ENCODE measurements at regions of chr2 and their contacts with region 1.

Region 1: DNA sequence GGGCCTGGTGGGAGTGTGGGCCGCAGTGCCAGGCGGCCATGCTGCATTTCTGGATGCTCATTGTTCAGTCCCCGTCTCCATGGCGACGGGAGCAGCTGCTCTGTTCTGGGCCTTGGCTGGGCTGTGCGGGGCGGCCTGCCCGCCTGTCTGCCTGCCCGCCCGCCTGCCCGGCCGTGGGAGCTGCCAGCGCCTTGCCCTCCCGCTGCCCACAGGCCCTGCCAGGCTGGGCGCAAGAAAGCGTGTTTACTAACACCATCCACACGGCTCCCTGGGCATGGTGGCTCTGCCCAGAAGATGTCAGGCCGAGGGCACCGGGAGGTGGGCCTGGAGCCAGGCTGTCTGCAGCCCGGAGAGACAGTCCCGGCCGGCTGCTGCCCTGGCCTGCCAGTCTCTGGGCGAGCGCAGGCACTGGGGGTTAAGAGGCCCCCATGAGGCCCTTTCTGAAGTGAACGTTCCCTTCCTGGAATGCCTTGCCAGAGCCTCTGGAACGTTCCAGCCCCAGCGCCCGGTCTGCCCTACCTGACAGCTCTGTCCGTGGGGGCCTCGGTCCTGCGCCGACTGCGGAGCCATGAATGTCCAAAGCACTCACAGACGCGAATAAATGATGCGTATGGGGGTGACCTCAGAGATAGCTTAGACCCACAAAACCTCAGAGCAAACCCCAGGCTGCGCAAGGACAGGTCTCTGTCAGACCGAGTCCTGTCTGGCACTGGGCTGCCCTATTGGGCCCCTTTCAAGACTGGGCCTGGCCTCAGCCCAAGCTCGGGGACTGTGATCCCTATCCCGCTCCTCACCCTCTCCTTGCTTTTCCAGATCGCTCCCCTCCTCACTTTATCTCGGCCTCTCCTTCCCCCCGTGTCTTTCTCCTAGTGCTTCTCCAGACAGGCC is 44.3 kb downstream of the MYCN start:
- DNase-seq: peak; percentile 87 to 95 (median 92)
- H3K4me3 ChIP-seq: peak overlapping the region in 22 of 59 donors; percentile 0 to 37 (median 19)
- H3K27ac ChIP-seq: peak overlapping the region; percentile 64 to 96 (median 91)
- H3K27me3 ChIP-seq: no peaks in the 10 kb centered on the region
- CTCF ChIP-seq: peak in 20 of 56 donors; percentile 6 to 42 (median 21)

Region 2: GRCh38 chr2:16012619-16013358 is 28.2 kb after region 1 on chr2:
- intact Hi-C with region 1: loop called in 1 of 2 experiments (anchors 1 kb)
- DNase-seq: peak in 8 of 10 donors; percentile 19 to 68 (median 52)
- H3K4me3 ChIP-seq: peak overlapping the region in 49 of 59 donors; percentile 2 to 59 (median 36)
- H3K27ac ChIP-seq: peak overlapping the region in 54 of 59 donors; percentile 2 to 90 (median 78)
- H3K27me3 ChIP-seq: peaks cover 0 to 16% (median 0%) of the 10 kb centered on the region in 45 donors
- CTCF ChIP-seq: peak in 2 of 56 donors; percentile 9 to 14

Region 3: GRCh38 chr2:16034151-16034973 is 49.8 kb after region 1 on chr2:
- intact Hi-C with region 1: loop called in 1 of 2 experiments (anchors 2 kb)
- DNase-seq: no peak
- H3K4me3 ChIP-seq: no peak overlapping the region
- H3K27ac ChIP-seq: peak overlapping the region in 12 of 59 donors; percentile 3 to 73 (median 36)
- H3K27me3 ChIP-seq: peaks cover 0 to 3% (median 0%) of the 10 kb centered on the region in 45 donors
- CTCF ChIP-seq: peak in 12 of 56 donors; percentile 10 to 33 (median 20)

Measured in dorsolateral prefrontal cortex (tissue), 120 donors.